Heart right ventricle (tissue), 16 donors: ENCODE measurements at regions of chr1 and their contacts with region 1.

Region 1: DNA sequence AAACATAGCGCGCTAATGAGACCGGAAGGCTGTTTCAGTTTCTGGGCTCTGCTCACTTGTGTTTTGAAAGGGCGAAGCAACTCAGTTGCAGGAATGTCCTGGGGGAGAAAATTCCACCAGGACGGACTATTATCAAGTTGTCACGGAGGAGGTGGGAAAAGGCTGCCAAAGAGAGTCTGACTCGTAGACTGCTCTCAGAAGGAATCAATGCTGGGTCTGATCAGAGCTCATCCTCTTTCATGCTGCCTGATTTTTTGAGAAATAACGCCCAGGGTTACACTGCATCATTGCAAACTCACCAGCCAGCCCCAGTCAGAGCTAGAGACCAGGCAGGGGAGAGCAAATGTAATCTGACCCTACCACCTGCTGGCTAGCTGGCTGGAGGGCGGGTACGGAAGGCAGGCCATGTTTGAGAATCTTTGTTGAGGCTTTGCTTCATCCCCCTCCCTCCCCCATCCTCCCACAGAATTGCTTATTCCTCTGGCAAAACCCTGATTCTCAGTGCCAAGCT is 36.4 kb upstream of the BCL9 start:
- DNase-seq: peak in 1 of 2 donors; percentile 29
- ATAC-seq: peak; percentile 25 to 80 (median 66)
- H3K4me3 ChIP-seq: peak overlapping the region in 5 of 10 donors; percentile 4 to 26 (median 8)
- H3K27ac ChIP-seq: peak overlapping the region in 6 of 10 donors; percentile 54 to 70 (median 66)
- H3K4me1 ChIP-seq: peaks cover 0 to 24% (median 6%) of the 10 kb centered on the region in 9 donors
- H3K27me3 ChIP-seq: no peaks in the 10 kb centered on the region
- CTCF ChIP-seq: no peak

Region 2: GRCh38 chr1:147152772-147153171 is 352.1 kb before region 1 on chr1:
- intact Hi-C with region 1: no loop called
- DNase-seq: no peak
- ATAC-seq: peak in 1 of 8 donors; percentile 27
- H3K4me3 ChIP-seq: no peak overlapping the region
- H3K27ac ChIP-seq: no peak overlapping the region
- H3K4me1 ChIP-seq: peaks cover 0 to 7% (median 0%) of the 10 kb centered on the region in 9 donors
- H3K27me3 ChIP-seq: no peaks in the 10 kb centered on the region
- CTCF ChIP-seq: no peak

Region 3: GRCh38 chr1:147611021-147611426 is 106.2 kb after region 1 on chr1:
- intact Hi-C with region 1: loop called in 1 of 10 experiments (anchors 5 kb)
- DNase-seq: no peak
- ATAC-seq: no peak
- H3K4me3 ChIP-seq: no peak overlapping the region
- H3K27ac ChIP-seq: no peak overlapping the region
- H3K4me1 ChIP-seq: peaks cover 0 to 37% (median 12%) of the 10 kb centered on the region in 9 donors
- H3K27me3 ChIP-seq: no peaks in the 10 kb centered on the region
- CTCF ChIP-seq: no peak